Activated B cell treated with CpG ODN at 0.5 μM for 24 hours (primary cell): ENCODE measurements at regions of chr6 and their contacts with region 1.

Region 1: DNA sequence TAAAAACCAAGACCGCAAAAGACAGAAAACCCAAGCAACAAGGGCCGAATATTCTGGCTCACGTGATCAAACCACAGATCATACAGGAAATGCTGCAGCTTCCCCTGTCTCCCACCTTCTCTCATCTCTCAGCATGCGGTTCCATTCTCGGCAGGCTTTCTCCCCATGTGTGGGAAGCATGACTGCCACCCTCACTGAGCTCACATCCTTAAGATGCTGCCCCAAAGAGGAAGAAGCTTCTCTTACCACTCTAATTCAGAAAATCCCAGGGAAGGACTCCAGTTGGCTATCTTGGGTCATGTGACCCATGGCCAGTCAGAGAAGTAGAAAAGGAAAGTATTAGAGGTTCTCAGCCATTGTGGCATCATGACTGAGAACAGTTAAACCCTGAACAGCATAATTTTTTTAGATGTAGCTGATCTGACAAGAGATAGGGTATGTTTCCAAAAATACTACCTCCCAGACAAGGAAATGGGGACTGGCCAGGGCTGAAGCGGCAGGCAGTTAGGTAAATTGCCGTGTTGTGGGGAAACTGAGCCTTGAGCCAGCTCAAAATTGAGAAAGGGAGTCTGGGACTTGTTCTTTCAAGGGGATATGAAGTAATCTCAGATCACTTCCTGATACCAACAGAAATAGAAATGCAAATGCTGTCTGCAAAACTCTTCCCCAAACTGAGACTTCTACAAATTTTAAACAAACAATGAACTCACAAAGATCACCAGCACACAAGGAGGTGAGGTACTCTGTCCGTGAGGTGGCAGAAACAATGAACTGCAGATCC is 37.1 kb upstream of the GRM4 start:
- DNase-seq: no peak
- ATAC-seq: peak; percentile 84
- H3K4me3 Mint-ChIP-seq: peak overlapping the region; percentile 79
- H3K27ac Mint-ChIP-seq: peak overlapping the region; percentile 95
- H3K4me1 Mint-ChIP-seq: peaks cover 23% of the 10 kb centered on the region
- H3K27me3 Mint-ChIP-seq: no peaks in the 10 kb centered on the region
- CTCF ChIP-seq: no peak

Region 2: DNA sequence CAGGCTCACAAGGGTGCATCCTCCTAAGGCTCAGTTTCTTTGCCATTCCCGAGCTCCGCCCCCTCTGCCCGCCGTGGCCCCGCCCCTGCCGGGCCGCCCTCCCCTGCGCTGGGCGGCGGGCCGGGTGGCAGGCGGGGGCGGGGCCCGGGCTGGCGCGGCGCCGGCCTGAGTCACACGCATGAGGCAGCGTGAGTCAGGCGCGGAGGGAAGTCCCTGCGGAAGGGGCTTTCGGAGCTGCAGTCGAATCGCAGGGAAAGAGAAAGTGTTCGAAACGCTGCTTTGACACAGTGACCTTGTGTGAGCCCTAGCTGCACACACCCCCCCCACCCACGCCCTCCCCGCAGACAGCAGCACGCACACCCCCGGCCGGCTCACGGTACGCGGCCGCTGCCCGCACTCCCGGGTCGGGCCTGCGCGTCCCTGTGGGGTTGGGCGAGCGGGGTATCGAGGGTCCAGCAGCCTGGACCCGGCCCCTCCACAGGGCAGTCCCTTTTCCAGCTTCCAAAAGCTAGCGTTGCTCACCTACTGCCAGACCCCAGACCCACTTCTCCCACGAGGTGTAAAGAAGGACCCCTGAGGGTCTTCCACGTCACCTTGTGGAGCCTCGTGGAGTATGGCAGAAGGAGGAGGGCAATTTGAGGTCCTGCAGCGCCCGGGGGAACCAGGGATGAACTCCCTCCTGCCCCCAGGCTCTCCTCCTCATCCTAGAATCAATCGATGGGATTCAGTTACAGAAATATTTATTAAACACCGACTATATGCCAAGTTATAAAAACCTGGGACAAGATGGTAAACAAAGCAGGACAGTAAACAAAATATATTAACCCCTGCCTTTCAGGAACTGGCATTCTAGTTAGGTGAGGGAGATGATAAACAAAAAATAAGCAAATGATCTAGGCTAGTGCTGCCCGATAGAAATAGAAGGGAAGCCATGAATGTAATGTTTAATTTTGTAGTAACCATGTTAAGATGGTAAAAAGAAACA is 41.3 kb after region 1 on chr6:
- CTCF ChIA-PET with region 1: no interaction called
- POLR2A ChIA-PET with region 1: interaction called, 7 read pairs
- intact Hi-C with region 1: loop called (anchors 1 kb)
- DNase-seq: peak; percentile 94
- ATAC-seq: peak; percentile 94
- H3K4me3 Mint-ChIP-seq: peak overlapping the region; percentile 68
- H3K27ac Mint-ChIP-seq: peak overlapping the region; percentile 87
- H3K4me1 Mint-ChIP-seq: peaks cover 64% of the 10 kb centered on the region
- H3K27me3 Mint-ChIP-seq: no peaks in the 10 kb centered on the region
- CTCF ChIP-seq: no peak